Activated CD4-positive, alpha-beta T cell treated with anti-CD3 and anti-CD28 coated beads for 36 hours (primary cell): ENCODE measurements at regions of chr19 and their contacts with region 1.

Region 1: GRCh38 chr19:40529093-40529954 is 47.3 kb upstream of the SHKBP1 start:
- DNase-seq: peak; percentile 95
- ATAC-seq: peak; percentile 75
- H3K4me3 Mint-ChIP-seq: peak overlapping the region; percentile 47
- H3K27ac Mint-ChIP-seq: no peak overlapping the region
- H3K4me1 Mint-ChIP-seq: peaks cover 11% of the 10 kb centered on the region
- H3K27me3 Mint-ChIP-seq: peaks cover 19% of the 10 kb centered on the region

Region 2: GRCh38 chr19:40257057-40257517 is 272.2 kb before region 1 on chr19:
- CTCF ChIA-PET with region 1: no interaction called
- POLR2A ChIA-PET with region 1: no interaction called
- intact Hi-C with region 1: no loop called
- DNase-seq: no peak
- ATAC-seq: no peak
- H3K4me3 Mint-ChIP-seq: no peak overlapping the region
- H3K27ac Mint-ChIP-seq: peak overlapping the region; percentile 58
- H3K4me1 Mint-ChIP-seq: peaks cover 15% of the 10 kb centered on the region
- H3K27me3 Mint-ChIP-seq: no peaks in the 10 kb centered on the region

Region 3: GRCh38 chr19:40305403-40305802 is 223.9 kb before region 1 on chr19:
- CTCF ChIA-PET with region 1: interaction called, 4 read pairs
- POLR2A ChIA-PET with region 1: no interaction called
- intact Hi-C with region 1: loop called (anchors 5 to 10 kb)
- DNase-seq: peak; percentile 90
- ATAC-seq: peak; percentile 83
- H3K4me3 Mint-ChIP-seq: no peak overlapping the region
- H3K27ac Mint-ChIP-seq: no peak overlapping the region
- H3K4me1 Mint-ChIP-seq: no peaks in the 10 kb centered on the region
- H3K27me3 Mint-ChIP-seq: no peaks in the 10 kb centered on the region

Region 4: GRCh38 chr19:40381321-40381720 is 148.0 kb before region 1 on chr19:
- CTCF ChIA-PET with region 1: no interaction called
- POLR2A ChIA-PET with region 1: no interaction called
- intact Hi-C with region 1: no loop called
- DNase-seq: no peak
- ATAC-seq: no peak
- H3K4me3 Mint-ChIP-seq: no peak overlapping the region
- H3K27ac Mint-ChIP-seq: no peak overlapping the region
- H3K4me1 Mint-ChIP-seq: no peaks in the 10 kb centered on the region
- H3K27me3 Mint-ChIP-seq: no peaks in the 10 kb centered on the region

Region 5: GRCh38 chr19:40465557-40466150 is 63.7 kb before region 1 on chr19 and contains the start of gene BLVRB:
- CTCF ChIA-PET with region 1: interaction called, 3 read pairs
- POLR2A ChIA-PET with region 1: interaction called, 3 read pairs
- intact Hi-C with region 1: loop called in 1 of 2 experiments (anchors 1 kb)
- DNase-seq: peak; percentile 100
- ATAC-seq: peak; percentile 84
- H3K4me3 Mint-ChIP-seq: peak within 1 kb of the TSS; percentile 77
- H3K27ac Mint-ChIP-seq: peak within 1 kb of the TSS; percentile 87
- H3K4me1 Mint-ChIP-seq: peaks cover 30% of the 10 kb centered on the region
- H3K27me3 Mint-ChIP-seq: peaks cover 11% of the 10 kb centered on the region
- total RNA-seq, gene BLVRB: 34.1 to 35.6 TPM

Region 6: GRCh38 chr19:40549007-40549708 is 19.8 kb after region 1 on chr19:
- CTCF ChIA-PET with region 1: interaction called, 11 read pairs
- POLR2A ChIA-PET with region 1: no interaction called
- intact Hi-C with region 1: no loop called
- DNase-seq: peak; percentile 90
- ATAC-seq: peak; percentile 95
- H3K4me3 Mint-ChIP-seq: no peak overlapping the region
- H3K27ac Mint-ChIP-seq: no peak overlapping the region
- H3K4me1 Mint-ChIP-seq: peaks cover 10% of the 10 kb centered on the region
- H3K27me3 Mint-ChIP-seq: peaks cover 37% of the 10 kb centered on the region

Region 7: GRCh38 chr19:40576585-40577451 is 47.5 kb after region 1 on chr19 and contains the start of gene SHKBP1:
- CTCF ChIA-PET with region 1: interaction called, 3 read pairs
- POLR2A ChIA-PET with region 1: no interaction called
- intact Hi-C with region 1: loop called in 1 of 2 experiments (anchors 1 kb)
- DNase-seq: peak; percentile 96
- ATAC-seq: peak; percentile 100
- H3K4me3 Mint-ChIP-seq: peak within 1 kb of the TSS; percentile 85
- H3K27ac Mint-ChIP-seq: peak within 1 kb of the TSS; percentile 74
- H3K4me1 Mint-ChIP-seq: peaks cover 16% of the 10 kb centered on the region
- H3K27me3 Mint-ChIP-seq: no peaks in the 10 kb centered on the region
- total RNA-seq, gene SHKBP1: 100 to 155 TPM

Region 8: GRCh38 chr19:40598121-40598917 is 69.0 kb after region 1 on chr19:
- CTCF ChIA-PET with region 1: interaction called, 3 read pairs
- POLR2A ChIA-PET with region 1: no interaction called
- intact Hi-C with region 1: loop called (anchors 1 to 2 kb)
- DNase-seq: peak; percentile 92
- ATAC-seq: peak; percentile 71
- H3K4me3 Mint-ChIP-seq: peak overlapping the region; percentile 23
- H3K27ac Mint-ChIP-seq: no peak overlapping the region
- H3K4me1 Mint-ChIP-seq: peaks cover 50% of the 10 kb centered on the region
- H3K27me3 Mint-ChIP-seq: peaks cover 34% of the 10 kb centered on the region